ENCODE measurements at regions of chr2 and their contacts with region 1.

Region 1: GRCh38 chr2:37585982-37586621 is 85.3 kb downstream of the CDC42EP3 start:
- DNase-seq: peak; percentile 88
- H3K4me3 Mint-ChIP-seq: peak overlapping the region; percentile 52
- H3K27ac Mint-ChIP-seq: peak overlapping the region; percentile 76
- H3K4me1 Mint-ChIP-seq: peaks cover 66% of the 10 kb centered on the region
- H3K27me3 Mint-ChIP-seq: no peaks in the 10 kb centered on the region

Region 2: DNA sequence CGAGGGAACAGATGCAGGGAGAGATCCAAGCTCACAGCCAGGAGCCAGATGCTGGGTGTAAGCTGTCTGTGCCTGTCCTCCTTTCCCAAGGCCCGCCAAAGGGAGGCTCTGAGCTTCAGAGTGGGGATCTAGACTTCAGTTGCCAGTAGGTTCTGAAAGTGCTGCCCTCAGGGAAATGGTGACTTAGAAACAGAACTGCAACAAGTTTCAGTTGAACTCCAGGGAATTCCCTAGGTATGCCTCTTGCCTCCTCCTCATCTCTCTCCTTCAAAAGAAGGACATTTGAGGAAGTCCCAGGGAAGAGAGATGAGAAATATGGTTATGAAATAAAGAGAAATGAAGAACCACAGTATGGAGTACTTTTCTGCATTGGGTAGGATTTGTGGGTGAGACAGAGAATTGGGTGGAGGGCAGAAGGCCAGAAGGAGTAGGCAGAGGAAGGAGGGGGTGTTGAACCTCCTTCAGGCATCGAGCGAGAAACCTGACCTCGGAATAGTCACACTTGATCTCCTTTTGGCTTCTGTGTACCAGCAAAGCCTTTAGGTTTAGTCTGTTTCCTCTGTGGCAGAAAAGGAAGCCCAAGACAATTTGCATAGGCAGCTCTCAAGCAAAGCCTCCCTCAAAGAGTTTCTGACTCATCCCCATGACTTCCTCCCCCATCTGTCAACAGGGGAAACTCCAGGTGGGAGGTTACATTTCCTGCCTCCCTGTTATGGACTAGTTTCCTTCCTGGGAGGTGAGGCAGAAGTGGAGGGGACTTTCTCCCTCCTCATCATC is 195.9 kb before region 1 on chr2:
- intact Hi-C with region 1: loop called (anchors 2 kb)
- DNase-seq: peak; percentile 91
- H3K4me3 Mint-ChIP-seq: peak overlapping the region; percentile 53
- H3K27ac Mint-ChIP-seq: peak overlapping the region; percentile 92
- H3K4me1 Mint-ChIP-seq: peaks cover 19% of the 10 kb centered on the region
- H3K27me3 Mint-ChIP-seq: peaks cover 8% of the 10 kb centered on the region

Region 3: GRCh38 chr2:37623971-37624900 is 38.1 kb after region 1 on chr2:
- intact Hi-C with region 1: loop called (anchors 2 kb)
- DNase-seq: no peak
- H3K4me3 Mint-ChIP-seq: peak overlapping the region; percentile 49
- H3K27ac Mint-ChIP-seq: peak overlapping the region; percentile 71
- H3K4me1 Mint-ChIP-seq: peaks cover 34% of the 10 kb centered on the region
- H3K27me3 Mint-ChIP-seq: peaks cover 5% of the 10 kb centered on the region

Region 4: GRCh38 chr2:37672104-37672869 is 86.2 kb after region 1 on chr2:
- intact Hi-C with region 1: loop called (anchors 2 kb)
- DNase-seq: peak; percentile 92
- H3K4me3 Mint-ChIP-seq: peak overlapping the region; percentile 88
- H3K27ac Mint-ChIP-seq: peak overlapping the region; percentile 76
- H3K4me1 Mint-ChIP-seq: peaks cover 37% of the 10 kb centered on the region
- H3K27me3 Mint-ChIP-seq: peaks cover 5% of the 10 kb centered on the region

Region 5: GRCh38 chr2:37711308-37711731 is 125.2 kb after region 1 on chr2:
- intact Hi-C with region 1: loop called (anchors 5 kb)
- DNase-seq: peak; percentile 83
- H3K4me3 Mint-ChIP-seq: peak overlapping the region; percentile 1
- H3K27ac Mint-ChIP-seq: peak overlapping the region; percentile 14
- H3K4me1 Mint-ChIP-seq: peaks cover 43% of the 10 kb centered on the region
- H3K27me3 Mint-ChIP-seq: peaks cover under 1% of the 10 kb centered on the region

Measured in activated CD4-positive, alpha-beta T cell treated with anti-CD3 and anti-CD28 coated beads, Interleukin-2, amount 10 ng/mL, durations not matched to agents 24 days and 14 days (primary cell).